ENCODE measurements at regions of chr10 and their contacts with region 1.

Region 1: GRCh38 chr10:7410862-7411670 is at the start of gene SFMBT2:
- DNase-seq: peak; percentile 60
- H3K4me3 Mint-ChIP-seq: peak within 1 kb of the TSS; percentile 97
- H3K27ac Mint-ChIP-seq: peak within 1 kb of the TSS; percentile 89
- H3K4me1 Mint-ChIP-seq: peaks cover 36% of the 10 kb centered on the region
- H3K27me3 Mint-ChIP-seq: peaks cover 23% of the 10 kb centered on the region
- total RNA-seq, gene SFMBT2: 27.6 and 27.7 TPM in 2 replicates

Region 2: DNA sequence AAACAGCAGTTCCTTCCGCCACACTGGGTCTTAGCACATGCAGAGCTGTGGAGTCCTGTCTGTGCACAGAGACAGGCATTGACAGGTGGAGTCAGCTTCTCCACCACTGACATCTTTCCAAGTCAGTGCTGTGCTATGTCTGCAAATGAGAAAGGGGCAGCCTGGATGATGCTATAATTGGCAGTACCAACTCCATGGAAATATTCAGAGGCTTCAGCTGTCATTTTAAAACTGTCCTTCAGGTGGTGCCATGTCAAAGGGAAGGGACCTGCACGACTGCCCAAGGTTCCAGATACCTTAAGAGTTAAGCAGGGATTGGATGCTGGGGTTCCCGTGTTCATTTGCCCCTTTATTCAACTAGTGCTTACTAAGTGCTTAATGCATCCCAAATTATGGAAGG is 572.9 kb before region 1 on chr10:
- intact Hi-C with region 1: loop called (anchors 10 kb)
- DNase-seq: no peak
- H3K4me3 Mint-ChIP-seq: no peak overlapping the region
- H3K27ac Mint-ChIP-seq: no peak overlapping the region
- H3K4me1 Mint-ChIP-seq: peaks cover 2% of the 10 kb centered on the region
- H3K27me3 Mint-ChIP-seq: peaks cover 7% of the 10 kb centered on the region

Region 3: GRCh38 chr10:7121154-7121810 is 289.8 kb before region 1 on chr10:
- intact Hi-C with region 1: loop called (anchors 1 kb)
- DNase-seq: peak; percentile 43
- H3K4me3 Mint-ChIP-seq: no peak overlapping the region
- H3K27ac Mint-ChIP-seq: no peak overlapping the region
- H3K4me1 Mint-ChIP-seq: peaks cover 4% of the 10 kb centered on the region
- H3K27me3 Mint-ChIP-seq: peaks cover 48% of the 10 kb centered on the region

Region 4: DNA sequence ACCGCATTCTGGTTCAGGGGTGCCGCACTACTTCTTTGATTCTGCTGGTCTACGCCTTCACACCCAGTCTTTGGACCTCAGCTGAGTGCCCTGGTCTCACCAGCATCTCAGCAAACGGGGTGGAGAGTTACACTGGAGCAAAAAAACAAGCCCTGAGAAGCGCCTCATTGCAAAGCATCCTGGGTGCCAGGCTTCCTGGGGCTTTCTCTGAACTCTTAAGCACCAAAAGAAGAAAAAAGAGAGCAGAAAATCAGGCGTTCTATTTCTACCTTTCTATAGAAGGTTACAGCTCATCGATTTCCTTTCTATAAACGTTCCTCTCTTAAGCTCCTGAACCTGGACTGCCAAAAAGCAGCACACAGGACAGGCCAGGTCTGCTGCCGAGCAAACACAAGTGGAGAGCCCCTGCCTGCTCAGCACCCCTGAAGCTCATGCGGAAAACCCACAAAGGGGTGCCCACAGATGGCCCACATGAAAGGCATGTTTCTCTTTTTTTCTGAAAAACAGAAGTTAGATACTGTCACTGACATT is 218.2 kb before region 1 on chr10:
- intact Hi-C with region 1: loop called (anchors 1 kb)
- DNase-seq: peak; percentile 62
- H3K4me3 Mint-ChIP-seq: peak overlapping the region; percentile 58
- H3K27ac Mint-ChIP-seq: peak overlapping the region; percentile 97
- H3K4me1 Mint-ChIP-seq: peaks cover 59% of the 10 kb centered on the region
- H3K27me3 Mint-ChIP-seq: no peaks in the 10 kb centered on the region

Region 5: GRCh38 chr10:7471720-7472367 is 60.8 kb after region 1 on chr10:
- intact Hi-C with region 1: no loop called
- DNase-seq: no peak
- H3K4me3 Mint-ChIP-seq: peak overlapping the region; percentile 38
- H3K27ac Mint-ChIP-seq: no peak overlapping the region
- H3K4me1 Mint-ChIP-seq: peaks cover 21% of the 10 kb centered on the region
- H3K27me3 Mint-ChIP-seq: no peaks in the 10 kb centered on the region

Region 6: GRCh38 chr10:7491949-7492659 is 81.0 kb after region 1 on chr10:
- intact Hi-C with region 1: no loop called
- DNase-seq: no peak
- H3K4me3 Mint-ChIP-seq: no peak overlapping the region
- H3K27ac Mint-ChIP-seq: peak overlapping the region; percentile 66
- H3K4me1 Mint-ChIP-seq: peaks cover 64% of the 10 kb centered on the region
- H3K27me3 Mint-ChIP-seq: peaks cover 2% of the 10 kb centered on the region

Region 7: GRCh38 chr10:7577176-7577575 is 166.1 kb after region 1 on chr10:
- intact Hi-C with region 1: no loop called
- DNase-seq: no peak
- H3K4me3 Mint-ChIP-seq: no peak overlapping the region
- H3K27ac Mint-ChIP-seq: no peak overlapping the region
- H3K4me1 Mint-ChIP-seq: no peaks in the 10 kb centered on the region
- H3K27me3 Mint-ChIP-seq: peaks cover 2% of the 10 kb centered on the region

Region 8: GRCh38 chr10:7622969-7623368 is 211.9 kb after region 1 on chr10:
- intact Hi-C with region 1: no loop called
- DNase-seq: no peak
- H3K4me3 Mint-ChIP-seq: no peak overlapping the region
- H3K27ac Mint-ChIP-seq: no peak overlapping the region
- H3K4me1 Mint-ChIP-seq: no peaks in the 10 kb centered on the region
- H3K27me3 Mint-ChIP-seq: peaks cover 8% of the 10 kb centered on the region